Posterior cingulate gyrus (tissue), 11 donors: ENCODE measurements at regions of chr7 and their contacts with region 1.

Region 1: GRCh38 chr7:79465551-79465950 is 12.1 kb upstream of the MAGI2 start:
- DNase-seq: no peak

Region 2: GRCh38 chr7:79337717-79338116 is 127.8 kb before region 1 on chr7:
- intact Hi-C with region 1: loop called (anchors 5 kb)
- DNase-seq: no peak

Region 3: GRCh38 chr7:79386688-79387422 is 78.7 kb before region 1 on chr7:
- intact Hi-C with region 1: no loop called
- DNase-seq: peak in 1 of 10 donors; percentile 48

Region 4: DNA sequence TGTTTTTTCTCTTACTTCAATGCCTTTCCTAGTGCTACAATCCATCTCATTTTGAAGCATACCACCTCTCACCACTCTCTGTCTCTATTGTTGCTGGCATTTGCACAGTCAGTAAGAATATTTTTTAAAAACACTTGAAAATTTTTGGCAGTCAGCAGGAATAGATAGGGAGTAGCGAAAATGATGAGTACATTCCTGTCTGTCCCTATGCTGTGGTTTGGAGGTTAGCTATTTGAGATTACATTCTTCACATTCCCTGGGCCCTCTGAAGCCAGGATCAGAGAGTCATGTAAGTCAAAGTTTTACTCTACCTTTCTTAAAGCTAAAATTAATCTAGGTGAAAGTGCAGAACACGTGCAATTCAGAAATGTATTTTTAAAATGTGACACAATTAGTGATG is 40.9 kb after region 1 on chr7:
- intact Hi-C with region 1: no loop called
- DNase-seq: no peak